Ascending aorta (tissue), 2 donors: ENCODE measurements at regions of chr3 and their contacts with region 1.

Region 1: DNA sequence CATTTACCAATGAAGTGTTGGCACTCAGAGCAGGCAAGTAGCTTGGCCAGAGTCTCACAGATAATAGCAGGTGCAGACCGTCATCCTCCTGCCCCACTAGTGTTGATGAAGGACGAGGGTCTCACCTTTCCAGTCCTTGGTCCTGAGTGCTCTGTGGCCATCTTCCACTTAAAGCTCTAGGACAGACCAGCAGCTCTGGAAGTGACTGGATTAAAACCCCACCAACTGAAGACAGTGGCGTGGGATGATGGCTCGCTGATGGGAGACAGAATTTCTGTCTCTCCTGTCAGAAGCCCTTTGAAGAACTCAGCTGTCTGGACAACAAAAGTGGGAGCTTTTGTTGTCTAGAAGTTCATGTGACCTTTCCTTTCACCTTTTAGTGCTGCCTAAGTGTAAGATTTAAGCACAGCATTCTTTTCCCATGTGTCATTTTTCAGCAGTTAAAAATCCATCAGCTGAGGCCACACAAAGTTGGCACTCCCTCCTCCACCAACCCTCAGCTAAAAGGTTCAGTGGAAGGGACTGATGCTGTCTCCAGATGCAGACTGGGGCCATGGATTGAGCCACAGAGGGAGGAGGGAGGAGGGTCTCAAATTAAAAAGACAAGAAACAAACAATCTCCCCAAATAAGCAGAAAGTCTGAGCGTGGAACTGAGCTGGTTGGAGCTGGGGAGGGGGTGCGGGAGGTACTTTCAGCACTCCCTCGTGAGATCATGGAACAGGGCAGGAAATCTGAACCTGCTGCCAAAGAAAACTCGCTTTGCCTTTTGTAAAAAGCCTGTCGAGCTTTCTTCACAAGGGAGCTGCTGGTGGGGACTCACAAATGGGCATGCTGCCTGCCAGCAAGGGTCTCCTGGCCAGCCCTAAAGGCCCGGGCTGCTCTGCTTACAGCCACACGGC is 148.5 kb upstream of the CTDSPL start:
- DNase-seq: peak in 1 of 2 donors; percentile 77
- H3K4me3 ChIP-seq: peak overlapping the region in 1 of 2 donors; percentile 14
- H3K27ac ChIP-seq: peak overlapping the region; percentile 80 to 85
- H3K4me1 ChIP-seq: peaks cover 12 to 50% of the 10 kb centered on the region in 2 donors
- H3K27me3 ChIP-seq: no peaks in the 10 kb centered on the region
- CTCF ChIP-seq: no peak

Region 2: GRCh38 chr3:37611771-37612170 is 101.4 kb before region 1 on chr3:
- intact Hi-C with region 1: loop called (anchors 5 kb)
- DNase-seq: no peak
- H3K4me3 ChIP-seq: no peak overlapping the region
- H3K27ac ChIP-seq: peak overlapping the region; percentile 69 to 71
- H3K4me1 ChIP-seq: peaks cover 3 to 42% of the 10 kb centered on the region in 2 donors
- H3K27me3 ChIP-seq: no peaks in the 10 kb centered on the region
- CTCF ChIP-seq: no peak